Common myeloid progenitor, CD34-positive (primary cell): ENCODE measurements at regions of chr3 and their contacts with region 1.

Region 1: GRCh38 chr3:151918253-151919029 is 45.0 kb downstream of the SUCNR1 start:
- DNase-seq: peak; percentile 64 to 78 (median 72)
- H3K4me3 ChIP-seq: no peak overlapping the region
- H3K27ac ChIP-seq: no peak overlapping the region
- H3K4me1 ChIP-seq: peaks cover 0 to 13% (median 9%) of the 10 kb centered on the region in 4 experiments
- H3K27me3 ChIP-seq: no peaks in the 10 kb centered on the region

Region 2: GRCh38 chr3:151439652-151440129 is 478.8 kb before region 1 on chr3:
- CTCF ChIA-PET with region 1: interaction called, 52 read pairs
- POLR2A ChIA-PET with region 1: no interaction called
- DNase-seq: peak; percentile 77 to 89 (median 86)
- H3K4me3 ChIP-seq: no peak overlapping the region
- H3K27ac ChIP-seq: no peak overlapping the region
- H3K4me1 ChIP-seq: no peaks in the 10 kb centered on the region
- H3K27me3 ChIP-seq: no peaks in the 10 kb centered on the region

Region 3: DNA sequence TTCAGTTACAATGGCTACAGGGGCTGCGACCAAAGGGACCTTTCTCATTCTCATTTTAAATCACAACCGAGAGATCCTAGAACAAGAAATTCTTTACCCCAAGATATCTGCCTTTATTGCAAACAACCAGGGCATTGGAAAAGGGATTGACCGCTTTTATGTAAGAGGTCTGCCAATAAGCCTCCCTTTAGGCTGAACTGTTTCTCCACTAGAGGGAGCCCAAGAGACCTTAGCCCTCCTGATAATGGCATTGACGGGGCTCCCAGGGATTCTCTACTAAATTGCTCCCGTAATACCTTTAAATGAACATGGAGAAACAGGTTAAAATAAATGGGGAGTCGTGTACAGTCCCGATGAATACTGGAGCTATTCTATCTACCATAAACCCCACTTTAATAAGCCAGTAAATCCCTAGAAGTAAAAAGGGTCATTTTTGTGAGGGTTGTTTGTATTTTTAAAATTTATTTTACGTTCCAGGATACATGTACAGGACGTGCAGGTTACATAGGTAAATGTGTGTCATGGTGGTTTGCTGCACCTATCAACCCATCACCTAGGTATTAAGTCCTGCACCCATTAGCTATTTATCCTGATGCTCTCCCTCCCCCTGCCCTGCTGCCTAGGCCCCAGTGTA is 450.0 kb before region 1 on chr3:
- CTCF ChIA-PET with region 1: interaction called, 13 read pairs
- POLR2A ChIA-PET with region 1: no interaction called
- DNase-seq: peak; percentile 64 to 73 (median 68)
- H3K4me3 ChIP-seq: no peak overlapping the region
- H3K27ac ChIP-seq: no peak overlapping the region
- H3K4me1 ChIP-seq: no peaks in the 10 kb centered on the region
- H3K27me3 ChIP-seq: no peaks in the 10 kb centered on the region

Region 4: DNA sequence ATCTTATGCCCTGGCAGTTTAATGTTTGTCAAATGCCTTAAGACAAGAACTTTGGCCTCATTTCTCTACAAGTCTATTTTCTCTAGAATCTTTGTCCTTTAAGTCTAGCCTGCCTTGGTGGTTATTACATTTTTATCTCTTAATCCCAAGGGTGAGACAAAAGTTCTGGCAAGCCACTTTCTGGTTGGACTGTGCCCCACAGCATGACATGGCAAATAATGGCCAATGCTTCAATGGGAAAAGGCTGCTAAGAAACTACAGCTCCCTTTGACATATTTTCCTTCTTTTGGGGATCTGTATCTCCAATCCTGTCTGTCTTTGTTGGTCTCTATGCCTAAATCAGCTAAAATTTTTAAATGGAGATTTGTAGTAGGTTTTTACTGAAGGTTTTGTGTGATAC is 168.7 kb after region 1 on chr3:
- CTCF ChIA-PET with region 1: no interaction called
- POLR2A ChIA-PET with region 1: no interaction called
- DNase-seq: no peak
- H3K4me3 ChIP-seq: no peak overlapping the region
- H3K27ac ChIP-seq: no peak overlapping the region
- H3K4me1 ChIP-seq: peaks cover 0 to 5% (median under 1%) of the 10 kb centered on the region in 4 experiments
- H3K27me3 ChIP-seq: no peaks in the 10 kb centered on the region